Activated T-helper 2 cell treated with anti-CD3 and anti-CD28 coated beads, Interferon-gamma antibody, Interleukin-2, Interleukin-4, amounts not matched to agents 10 μg/mL and 5 μg/mL and 100 μg/mL, durations not matched to agents 14 hours and 24 hours and 36 hours (primary cell): ENCODE measurements at regions of chr11 and their contacts with region 1.

Region 1: DNA sequence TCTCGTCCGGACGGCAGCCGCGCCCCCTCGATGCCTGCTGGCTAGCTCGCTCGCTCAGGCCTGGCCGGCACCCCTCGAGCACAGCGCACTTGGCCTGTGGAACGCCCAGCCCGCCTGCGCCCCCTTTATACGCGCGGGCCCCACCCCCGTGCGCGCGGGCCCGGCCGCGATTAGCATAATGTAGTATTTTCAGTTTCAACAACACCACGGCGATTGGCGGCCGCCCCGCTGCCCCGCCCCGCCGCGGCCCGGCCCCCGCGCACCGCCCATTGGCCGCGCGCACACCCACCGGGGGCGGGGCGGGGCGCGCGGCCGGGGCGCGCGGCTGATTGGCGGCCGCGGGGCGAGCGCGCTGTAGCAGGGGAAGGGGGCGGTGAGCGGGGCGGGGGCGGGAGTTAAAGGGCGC is at the start of gene CDKN1C:
- DNase-seq: peak; percentile 77
- H3K4me3 Mint-ChIP-seq: peak within 1 kb of the TSS; percentile 84
- H3K27ac Mint-ChIP-seq: no peak within 1 kb of the TSS
- H3K4me1 Mint-ChIP-seq: peaks cover 4% of the 10 kb centered on the region
- H3K27me3 Mint-ChIP-seq: peaks cover 33% of the 10 kb centered on the region
- total RNA-seq, gene CDKN1C: 1.7 TPM in 2 replicates

Region 2: GRCh38 chr11:2428322-2428795 is 457.3 kb before region 1 on chr11:
- intact Hi-C with region 1: loop called (anchors 5 kb)
- DNase-seq: peak; percentile 62
- H3K4me3 Mint-ChIP-seq: no peak overlapping the region
- H3K27ac Mint-ChIP-seq: no peak overlapping the region
- H3K4me1 Mint-ChIP-seq: no peaks in the 10 kb centered on the region
- H3K27me3 Mint-ChIP-seq: no peaks in the 10 kb centered on the region

Region 3: DNA sequence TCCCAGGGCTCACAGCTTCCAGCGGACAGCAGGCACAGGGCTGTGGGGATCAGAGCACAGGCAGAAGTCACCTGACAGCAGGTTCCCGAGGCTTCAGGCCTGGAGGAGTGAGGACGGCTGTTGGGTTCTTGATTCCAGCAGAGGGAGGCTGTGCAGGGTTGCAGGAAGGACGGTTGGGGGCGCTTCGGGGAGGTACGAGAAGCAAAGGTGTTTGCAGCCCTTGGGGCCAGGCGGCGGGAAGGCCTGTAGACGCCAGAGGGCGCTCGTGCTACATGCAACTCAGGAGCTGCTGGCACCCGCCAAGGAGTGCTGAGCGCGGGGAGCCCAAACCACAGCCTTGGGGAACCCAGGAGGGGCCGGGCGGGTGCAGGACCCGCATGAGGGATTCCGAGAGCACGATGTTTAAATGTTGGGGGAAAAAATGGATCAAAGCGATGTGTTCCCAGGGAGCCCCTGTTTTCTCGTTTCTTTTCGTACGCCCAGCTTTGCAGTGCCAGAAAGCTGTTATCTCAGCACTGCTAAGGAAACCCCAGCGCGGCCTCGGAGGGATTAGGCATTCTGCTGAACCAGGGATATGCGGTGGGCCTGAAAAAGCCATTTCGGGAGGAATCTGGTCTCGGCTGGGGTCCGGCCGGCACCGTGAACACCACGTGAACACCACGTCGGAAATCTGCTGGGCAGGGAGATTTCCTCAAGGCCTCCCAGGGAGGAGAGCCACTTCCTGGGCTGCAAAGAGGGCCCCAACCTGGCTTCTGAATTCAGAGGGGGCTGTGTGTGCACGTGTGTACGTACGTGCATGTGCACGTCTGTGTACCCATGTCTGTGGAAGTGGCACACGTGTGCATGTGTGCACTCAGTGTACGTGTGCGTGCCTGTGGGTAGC is 352.7 kb before region 1 on chr11:
- intact Hi-C with region 1: loop called (anchors 1 kb)
- DNase-seq: peak; percentile 84
- H3K4me3 Mint-ChIP-seq: no peak overlapping the region
- H3K27ac Mint-ChIP-seq: peak overlapping the region; percentile 11
- H3K4me1 Mint-ChIP-seq: peaks cover 7% of the 10 kb centered on the region
- H3K27me3 Mint-ChIP-seq: no peaks in the 10 kb centered on the region

Region 4: GRCh38 chr11:2691991-2692875 is 193.4 kb before region 1 on chr11:
- intact Hi-C with region 1: loop called (anchors 5 kb)
- DNase-seq: no peak
- H3K4me3 Mint-ChIP-seq: no peak overlapping the region
- H3K27ac Mint-ChIP-seq: no peak overlapping the region
- H3K4me1 Mint-ChIP-seq: no peaks in the 10 kb centered on the region
- H3K27me3 Mint-ChIP-seq: no peaks in the 10 kb centered on the region

Region 5: DNA sequence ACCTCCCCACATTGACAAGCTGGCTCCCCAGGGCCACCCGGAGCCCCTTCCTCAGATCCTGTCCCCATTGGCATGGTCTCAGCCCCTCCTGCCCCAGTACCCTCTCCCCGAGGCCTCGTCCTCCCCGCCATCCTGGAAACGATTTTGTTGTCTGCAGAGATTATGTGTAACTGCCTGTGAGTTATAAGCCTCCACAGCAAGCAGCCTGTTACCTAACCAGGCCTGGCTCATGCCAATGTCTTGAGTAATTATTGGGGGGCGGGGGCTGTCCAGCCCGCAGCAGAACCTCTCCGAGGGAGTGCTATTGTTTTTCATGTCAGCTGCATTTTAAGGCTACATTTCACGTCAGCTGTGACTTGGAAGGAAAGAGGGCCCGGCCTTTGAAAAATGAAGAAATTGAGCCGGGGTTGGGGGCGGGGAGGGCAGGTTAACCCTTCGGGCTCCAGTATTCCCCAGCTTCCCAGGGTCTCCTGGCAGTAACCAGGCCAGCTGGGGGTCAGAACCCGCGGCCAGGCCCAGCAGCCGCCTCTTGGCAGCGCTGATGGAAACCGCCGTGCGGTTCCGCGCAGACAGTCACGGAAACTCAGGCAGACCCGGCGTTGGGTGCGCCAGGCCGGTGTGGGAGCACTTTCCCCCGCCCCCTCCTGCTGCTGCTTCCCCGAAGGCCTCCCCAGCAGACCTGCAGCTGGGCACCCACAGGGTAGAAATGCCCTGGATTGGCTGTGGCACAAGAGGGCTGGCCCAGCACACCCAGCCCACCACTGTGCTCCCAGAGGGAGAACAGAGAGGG is 59.6 kb before region 1 on chr11:
- intact Hi-C with region 1: no loop called
- DNase-seq: no peak
- H3K4me3 Mint-ChIP-seq: no peak overlapping the region
- H3K27ac Mint-ChIP-seq: no peak overlapping the region
- H3K4me1 Mint-ChIP-seq: no peaks in the 10 kb centered on the region
- H3K27me3 Mint-ChIP-seq: no peaks in the 10 kb centered on the region

Region 6: GRCh38 chr11:2901854-2902783 is 16.4 kb after region 1 on chr11:
- intact Hi-C with region 1: loop called (anchors 2 kb)
- DNase-seq: peak; percentile 94
- H3K4me3 Mint-ChIP-seq: peak overlapping the region; percentile 74
- H3K27ac Mint-ChIP-seq: peak overlapping the region; percentile 61
- H3K4me1 Mint-ChIP-seq: peaks cover 37% of the 10 kb centered on the region
- H3K27me3 Mint-ChIP-seq: no peaks in the 10 kb centered on the region